Lower leg skin (tissue), 4 donors: ENCODE measurements at regions of chr11 and their contacts with region 1.

Region 1: DNA sequence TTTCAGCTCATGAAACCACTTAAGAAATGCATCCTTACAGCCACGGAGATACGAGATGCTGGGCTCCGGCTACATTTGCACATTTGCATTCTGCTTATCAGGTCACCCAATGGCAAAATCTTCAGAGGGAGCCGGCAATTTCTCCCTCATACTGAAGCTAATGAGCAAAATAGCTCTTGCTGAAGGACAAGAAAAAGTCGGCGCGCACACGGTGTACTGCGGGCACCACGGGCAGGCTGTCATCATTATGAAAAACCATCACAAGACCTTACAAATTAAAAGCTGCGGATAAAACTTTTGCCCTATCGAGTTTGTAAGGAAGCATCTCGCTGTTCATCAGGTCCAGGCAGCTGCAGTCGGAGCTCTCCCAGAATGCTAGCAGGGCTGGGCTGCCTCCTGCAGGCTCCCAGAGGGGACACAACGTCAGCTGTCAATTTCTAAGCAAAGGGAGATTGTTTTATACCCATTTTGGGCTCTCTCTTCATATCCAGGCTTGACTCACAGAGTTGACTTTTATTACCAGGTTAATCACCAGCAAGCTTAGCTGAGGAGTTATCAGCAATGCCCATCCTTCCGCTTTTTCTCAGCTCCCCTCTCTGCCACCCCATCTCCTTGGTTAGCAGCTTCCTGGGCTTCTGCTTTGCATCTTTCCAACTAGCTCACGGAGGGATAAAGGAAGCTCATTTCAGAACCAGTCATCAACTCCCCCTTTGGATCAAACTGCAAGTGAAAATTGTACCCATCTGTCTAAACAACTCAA is 375.1 kb downstream of the OPCML start:
- DNase-seq: peak in 1 of 2 donors; percentile 75
- H3K4me3 ChIP-seq: no peak overlapping the region
- CTCF ChIP-seq: no peak
- POLR2A ChIP-seq: no peak

Region 2: DNA sequence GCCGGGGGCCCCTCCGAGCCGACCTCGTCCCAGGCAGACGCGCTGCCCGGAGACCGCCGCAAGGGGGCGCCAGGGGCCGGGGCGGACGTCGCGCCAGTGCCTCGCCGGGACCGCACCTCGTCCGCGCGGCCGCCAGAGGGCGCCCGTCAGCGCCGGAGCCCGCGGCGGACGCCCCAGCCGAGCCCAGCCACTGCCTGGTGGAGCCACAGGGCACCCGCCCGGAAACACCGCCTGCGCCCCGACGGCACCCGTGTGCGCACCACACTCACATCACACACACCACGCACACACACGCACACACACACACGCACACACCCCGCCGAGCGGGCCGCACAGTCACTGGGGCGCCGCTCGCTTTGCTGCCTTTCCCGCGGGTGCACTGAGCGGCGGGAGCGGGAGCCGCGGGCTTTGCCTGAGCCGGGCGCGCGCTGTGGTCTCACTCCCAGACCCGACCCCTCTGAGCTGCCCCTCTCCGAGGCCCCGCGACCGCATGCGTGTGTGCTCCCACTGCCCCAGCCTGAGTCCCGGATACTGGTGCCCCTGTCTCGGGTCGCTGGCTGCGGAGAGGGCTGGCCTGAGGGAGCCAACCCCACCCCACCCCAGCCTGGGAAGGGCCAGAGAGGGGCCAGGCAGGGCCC is 74.2 kb before region 1 on chr11:
- intact Hi-C with region 1: loop called (anchors 10 kb)
- DNase-seq: no peak
- H3K4me3 ChIP-seq: no peak overlapping the region
- CTCF ChIP-seq: no peak
- POLR2A ChIP-seq: no peak